ENCODE measurements at regions of chr1 and their contacts with region 1.

Region 1: GRCh38 chr1:113871597-113872113 is at the start of gene PTPN22:
- DNase-seq: peak; percentile 91
- ATAC-seq: peak; percentile 87
- H3K4me3 Mint-ChIP-seq: peak within 1 kb of the TSS; percentile 84
- H3K27ac Mint-ChIP-seq: peak within 1 kb of the TSS; percentile 99
- H3K4me1 Mint-ChIP-seq: peaks cover 75% of the 10 kb centered on the region
- H3K27me3 Mint-ChIP-seq: no peaks in the 10 kb centered on the region
- total RNA-seq, gene PTPN22: 74.8 to 78.9 TPM

Region 2: GRCh38 chr1:113630068-113630975 is 241.3 kb before region 1 on chr1:
- CTCF ChIA-PET with region 1: no interaction called
- POLR2A ChIA-PET with region 1: no interaction called
- DNase-seq: no peak
- ATAC-seq: no peak
- H3K4me3 Mint-ChIP-seq: no peak overlapping the region
- H3K27ac Mint-ChIP-seq: no peak overlapping the region
- H3K4me1 Mint-ChIP-seq: no peaks in the 10 kb centered on the region
- H3K27me3 Mint-ChIP-seq: peaks cover 7% of the 10 kb centered on the region

Region 3: DNA sequence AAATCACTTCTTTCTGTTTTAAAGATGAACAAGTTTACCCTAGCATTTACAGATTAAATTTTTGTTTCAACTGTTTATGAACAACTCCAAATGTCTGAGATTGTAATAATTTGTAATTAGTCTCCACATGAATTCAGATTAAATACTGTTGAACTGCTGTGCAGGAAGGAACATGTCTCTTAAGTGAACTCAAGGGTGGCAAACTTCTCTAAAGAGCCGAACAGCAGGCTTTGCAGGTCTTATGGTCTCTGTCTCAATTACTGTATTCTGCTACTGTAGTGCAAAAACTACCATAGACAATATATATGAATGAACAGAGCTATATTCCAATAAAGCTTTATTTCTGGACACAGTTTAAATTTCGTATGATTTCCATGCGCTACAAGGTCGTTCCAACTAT is 66.0 kb before region 1 on chr1:
- CTCF ChIA-PET with region 1: no interaction called
- POLR2A ChIA-PET with region 1: no interaction called
- DNase-seq: no peak
- ATAC-seq: no peak
- H3K4me3 Mint-ChIP-seq: no peak overlapping the region
- H3K27ac Mint-ChIP-seq: no peak overlapping the region
- H3K4me1 Mint-ChIP-seq: peaks cover 63% of the 10 kb centered on the region
- H3K27me3 Mint-ChIP-seq: no peaks in the 10 kb centered on the region

Region 4: DNA sequence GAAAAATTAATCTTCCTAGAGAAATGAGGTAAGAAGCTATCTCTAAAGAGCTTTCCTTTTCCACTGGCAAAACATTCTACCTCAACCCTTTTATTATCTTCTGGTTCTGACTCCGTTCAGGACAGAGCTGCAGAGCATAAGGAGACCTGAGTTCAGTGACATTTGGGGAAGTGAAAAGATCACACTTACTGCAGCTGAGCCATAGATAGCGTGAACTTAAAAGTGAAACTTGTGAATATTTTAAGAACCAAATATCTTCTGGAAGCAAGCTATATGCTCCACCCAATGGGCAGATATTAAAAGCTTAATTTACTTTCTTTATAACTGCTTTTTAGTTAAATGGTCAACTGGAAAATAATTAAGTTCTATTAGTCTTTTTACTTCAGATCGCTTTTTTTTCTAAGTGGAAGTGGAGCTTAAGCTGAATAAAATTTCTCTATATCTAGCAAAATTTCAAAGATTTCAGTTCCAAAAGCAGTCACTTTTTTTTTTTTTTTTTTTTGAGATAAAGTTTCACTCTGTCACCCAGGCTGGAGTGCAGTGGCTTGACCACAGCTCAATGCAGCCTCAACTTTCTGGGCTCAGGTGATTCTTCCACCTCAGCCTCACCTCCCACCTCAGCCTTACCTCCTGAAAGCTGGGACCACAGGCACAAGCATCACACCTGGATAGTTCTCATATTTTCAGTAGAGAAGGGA is 12.0 kb before region 1 on chr1:
- CTCF ChIA-PET with region 1: interaction called, 18 read pairs
- POLR2A ChIA-PET with region 1: interaction called, 4 read pairs
- DNase-seq: no peak
- ATAC-seq: peak; percentile 45
- H3K4me3 Mint-ChIP-seq: no peak overlapping the region
- H3K27ac Mint-ChIP-seq: peak overlapping the region; percentile 53
- H3K4me1 Mint-ChIP-seq: peaks cover 41% of the 10 kb centered on the region
- H3K27me3 Mint-ChIP-seq: no peaks in the 10 kb centered on the region

Region 5: GRCh38 chr1:113881661-113882060 is 10.0 kb after region 1 on chr1:
- CTCF ChIA-PET with region 1: interaction called, 12 read pairs
- POLR2A ChIA-PET with region 1: interaction called, 15 read pairs
- DNase-seq: no peak
- ATAC-seq: no peak
- H3K4me3 Mint-ChIP-seq: no peak overlapping the region
- H3K27ac Mint-ChIP-seq: no peak overlapping the region
- H3K4me1 Mint-ChIP-seq: peaks cover 42% of the 10 kb centered on the region
- H3K27me3 Mint-ChIP-seq: no peaks in the 10 kb centered on the region